Transverse colon (tissue), 4 donors: ENCODE measurements at regions of chr16 and their contacts with region 1.

Region 1: GRCh38 chr16:80940069-80940856 is 66.4 kb downstream of the CMC2 start:
- DNase-seq: no peak
- H3K4me3 ChIP-seq: no peak overlapping the region
- H3K27ac ChIP-seq: no peak overlapping the region
- H3K4me1 ChIP-seq: peaks cover 0 to 3% (median 1%) of the 10 kb centered on the region in 4 donors
- H3K27me3 ChIP-seq: no peaks in the 10 kb centered on the region
- CTCF ChIP-seq: no peak
- EP300 ChIP-seq: no peak
- POLR2A ChIP-seq: no peak

Region 2: DNA sequence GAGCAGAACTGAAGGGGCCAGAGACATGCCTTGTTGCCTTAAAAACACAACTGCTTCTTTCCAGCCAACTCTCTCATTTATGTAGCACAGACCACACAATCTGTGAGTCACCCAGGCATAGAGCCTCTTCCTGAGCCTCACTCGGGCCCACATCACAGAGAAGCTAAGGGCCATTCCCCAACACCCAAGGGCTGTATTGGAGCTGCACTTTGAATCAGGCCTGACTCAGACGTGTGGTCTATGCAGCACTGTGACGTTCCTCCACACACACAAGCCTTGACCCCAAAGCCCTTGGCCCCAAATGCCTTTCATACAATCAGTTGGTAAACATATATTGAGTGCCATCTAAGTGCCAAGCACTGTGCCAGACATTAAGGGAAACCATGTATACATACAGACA is 708.4 kb before region 1 on chr16:
- in situ Hi-C with region 1: no loop called
- intact Hi-C with region 1: loop called (anchors 5 kb)
- DNase-seq: no peak
- H3K4me3 ChIP-seq: no peak overlapping the region
- H3K27ac ChIP-seq: no peak overlapping the region
- H3K4me1 ChIP-seq: no peaks in the 10 kb centered on the region
- H3K27me3 ChIP-seq: no peaks in the 10 kb centered on the region
- CTCF ChIP-seq: no peak
- EP300 ChIP-seq: no peak
- POLR2A ChIP-seq: no peak

Region 3: DNA sequence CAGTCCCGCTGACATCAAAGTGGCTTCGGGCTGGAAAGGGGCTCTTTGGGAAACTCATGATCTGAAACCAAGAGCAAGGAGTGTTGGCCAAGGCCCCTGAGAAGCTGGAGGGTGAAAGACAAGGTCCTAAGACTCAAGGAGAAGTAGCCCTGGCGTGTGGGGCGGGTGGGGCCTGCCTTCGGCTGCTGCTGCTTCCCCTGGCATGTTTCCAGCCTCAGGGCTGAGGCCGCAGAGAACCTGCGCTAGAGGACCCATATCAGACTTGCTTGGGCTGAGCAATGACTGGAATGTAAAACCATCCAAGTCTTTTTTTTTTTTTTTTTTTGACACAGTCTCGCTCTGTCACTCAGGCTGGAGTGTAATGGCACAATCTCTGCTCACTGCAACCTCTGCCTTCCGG is 223.4 kb after region 1 on chr16:
- in situ Hi-C with region 1: no loop called
- intact Hi-C with region 1: no loop called
- DNase-seq: no peak
- H3K4me3 ChIP-seq: no peak overlapping the region
- H3K27ac ChIP-seq: no peak overlapping the region
- H3K4me1 ChIP-seq: no peaks in the 10 kb centered on the region
- H3K27me3 ChIP-seq: no peaks in the 10 kb centered on the region
- CTCF ChIP-seq: no peak
- EP300 ChIP-seq: no peak
- POLR2A ChIP-seq: no peak